ENCODE measurements at regions of chr11 and their contacts with region 1.

Region 1: DNA sequence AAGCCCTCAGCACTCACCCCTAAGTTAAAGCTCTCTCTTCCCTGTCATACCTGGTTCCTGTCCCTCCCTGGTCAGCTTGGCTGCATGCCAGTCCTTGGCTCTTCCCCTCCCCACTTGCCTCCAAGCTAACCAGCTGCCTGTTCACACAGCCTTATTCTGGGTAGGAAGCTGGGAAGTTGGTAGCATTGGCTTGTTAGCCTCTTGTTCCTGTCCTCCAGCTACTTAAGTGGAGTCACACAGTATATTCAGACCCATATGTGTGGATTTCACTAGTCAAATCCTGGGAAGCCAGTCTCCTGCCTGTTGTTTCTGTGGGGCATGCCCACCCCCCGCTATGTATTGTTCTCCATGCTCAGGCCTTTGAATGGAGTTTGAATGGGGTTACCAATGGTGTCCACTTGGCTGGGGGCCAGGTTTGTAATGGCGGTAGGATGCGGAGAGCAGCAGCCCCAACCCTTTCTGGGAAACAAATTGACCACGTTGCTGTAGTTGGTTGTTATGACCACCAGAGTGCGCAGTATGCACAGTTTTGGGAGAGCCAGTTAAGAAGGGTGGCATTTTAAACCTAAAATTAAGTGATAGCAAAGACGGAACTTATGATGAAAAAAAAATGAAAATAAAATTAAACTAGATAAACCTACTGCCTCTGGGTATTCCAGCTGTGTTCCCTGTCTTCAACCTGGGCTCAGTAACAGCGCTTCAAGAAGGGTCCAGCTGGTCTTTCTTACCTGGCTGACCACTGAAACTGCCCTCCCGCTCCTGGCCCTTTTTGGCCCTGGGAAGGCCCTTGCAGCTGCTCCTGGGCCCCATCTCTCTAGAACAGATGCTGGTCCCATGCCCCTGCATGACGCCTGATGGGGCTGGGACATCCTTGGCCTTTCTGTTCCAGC is 10.7 kb upstream of the RPS3 start:
- DNase-seq: peak; percentile 58 to 85 (median 67)
- H3K4me3 ChIP-seq: no peak overlapping the region
- H3K27ac ChIP-seq: no peak overlapping the region
- H3K4me1 ChIP-seq: peaks cover 0 to 3% of the 10 kb centered on the region in 2 donors
- H3K27me3 ChIP-seq: peaks cover 6% of the 10 kb centered on the region
- CTCF ChIP-seq: peak; percentile 73 to 84 (median 82)
- POLR2A ChIP-seq: no peak

Region 2: DNA sequence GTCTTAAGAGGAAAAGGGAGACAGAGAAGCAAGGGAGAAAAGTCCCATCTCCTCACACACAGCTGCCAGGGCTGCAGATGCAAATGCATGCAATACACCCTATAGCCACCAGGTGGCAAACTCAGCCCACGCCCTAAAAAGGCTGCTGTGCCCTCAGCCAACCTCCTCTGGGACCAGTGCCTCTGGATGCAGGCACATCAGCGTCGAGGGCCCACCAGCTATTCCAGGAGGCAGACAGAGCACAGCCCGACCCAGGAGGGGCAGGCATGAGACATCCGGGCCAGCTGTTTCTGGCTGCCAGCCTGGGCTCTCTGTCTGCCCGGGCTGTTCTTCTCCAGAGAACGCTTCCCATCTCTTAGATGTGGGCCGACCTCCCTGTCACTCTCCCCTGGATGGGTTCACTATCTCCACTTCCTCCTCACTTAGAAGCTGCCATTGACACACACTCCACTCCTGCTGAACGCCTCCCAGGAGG is 108.4 kb before region 1 on chr11:
- intact Hi-C with region 1: loop called (anchors 1 to 2 kb)
- DNase-seq: peak; percentile 71 to 92 (median 78)
- H3K4me3 ChIP-seq: no peak overlapping the region
- H3K27ac ChIP-seq: peak overlapping the region in 1 of 5 donors; percentile 7
- H3K4me1 ChIP-seq: no peaks in the 10 kb centered on the region
- H3K27me3 ChIP-seq: no peaks in the 10 kb centered on the region
- CTCF ChIP-seq: peak; percentile 96 to 98 (median 97)
- POLR2A ChIP-seq: no peak

Region 3: DNA sequence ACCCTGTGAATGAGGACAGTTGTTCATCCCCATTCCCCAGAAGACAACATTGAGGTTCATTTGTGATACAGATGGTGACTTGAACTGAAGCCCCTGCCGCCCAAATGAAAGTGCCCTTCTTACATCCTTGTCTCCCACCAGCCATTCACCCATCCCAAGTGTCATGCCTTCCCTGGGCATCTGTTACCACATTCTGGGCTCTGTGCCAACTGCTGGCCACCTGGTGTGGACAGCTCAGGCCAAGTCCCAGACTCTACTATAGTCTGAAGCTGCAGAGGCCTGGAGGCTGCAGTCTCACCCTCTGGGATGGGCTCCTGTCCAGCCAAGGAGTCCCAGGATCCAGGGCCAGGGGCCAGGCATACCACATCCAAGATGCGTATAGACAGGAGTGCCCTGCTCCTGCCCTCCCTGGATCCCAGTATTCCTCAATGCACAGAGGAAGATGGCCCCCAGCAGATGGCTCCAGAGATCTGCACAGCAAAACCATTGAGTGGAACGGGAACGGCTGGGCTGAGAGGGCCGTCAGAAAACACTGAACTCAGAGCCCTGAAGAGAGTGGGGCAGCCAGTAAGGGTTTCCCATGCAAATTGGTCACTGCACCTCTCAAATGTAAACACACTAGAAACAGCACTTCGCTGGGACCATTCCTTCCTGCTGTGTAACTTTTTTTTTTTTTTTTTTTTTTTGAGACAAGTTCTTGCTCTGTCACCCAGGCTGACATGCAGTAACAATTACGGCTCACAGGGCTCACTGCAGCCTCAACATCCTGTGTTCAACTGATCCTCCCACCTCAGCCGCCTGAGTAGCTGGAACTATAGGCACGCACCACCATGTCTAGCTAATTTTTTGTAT is 60.0 kb before region 1 on chr11:
- intact Hi-C with region 1: loop called (anchors 2 to 10 kb)
- DNase-seq: peak; percentile 39 to 81 (median 58)
- H3K4me3 ChIP-seq: no peak overlapping the region
- H3K27ac ChIP-seq: peak overlapping the region in 1 of 5 donors; percentile 40
- H3K4me1 ChIP-seq: peaks cover 0 to 16% of the 10 kb centered on the region in 2 donors
- H3K27me3 ChIP-seq: no peaks in the 10 kb centered on the region
- CTCF ChIP-seq: peak in 5 of 6 experiments; percentile 42 to 64 (median 51)
- POLR2A ChIP-seq: no peak

Region 4: DNA sequence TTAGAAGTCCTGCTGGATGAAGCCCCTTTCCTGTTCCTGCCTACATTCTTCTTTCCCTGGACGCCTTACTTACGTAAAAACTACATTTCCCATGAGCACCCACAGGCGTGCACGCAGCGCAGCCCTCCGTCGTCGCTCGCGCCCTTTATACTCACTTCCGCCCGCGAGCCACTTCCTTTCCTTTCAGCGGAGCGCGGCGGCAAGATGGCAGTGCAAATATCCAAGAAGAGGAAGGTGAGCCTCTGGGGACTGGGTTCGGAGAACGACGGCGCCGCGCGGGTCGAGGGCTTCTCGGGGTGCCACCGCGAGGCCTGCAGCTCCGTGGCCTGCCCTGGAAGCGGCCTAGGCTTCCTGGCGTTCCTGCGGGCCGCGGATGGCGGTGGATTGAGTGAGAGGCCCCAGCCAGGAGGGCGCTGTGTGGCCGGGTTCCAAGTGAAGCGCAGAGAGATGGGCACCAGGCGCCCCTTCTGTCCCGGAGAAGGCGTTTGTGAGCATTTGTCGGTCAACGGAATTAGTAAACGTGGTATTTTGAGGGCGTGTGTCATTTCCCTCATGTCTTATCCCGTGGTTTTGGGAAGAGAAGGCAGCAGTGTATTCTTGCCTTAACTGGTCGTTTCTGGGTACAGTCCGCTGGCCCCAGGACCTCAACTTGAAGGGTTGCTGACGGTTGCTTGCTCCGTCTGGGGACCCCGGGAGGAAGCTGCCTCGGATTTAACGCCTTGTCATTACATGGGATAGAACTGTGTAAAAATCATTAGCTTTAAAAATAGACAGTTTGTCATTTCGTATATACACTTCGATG is 10.9 kb after region 1 on chr11 and contains the start of gene RPS3:
- intact Hi-C with region 1: no loop called
- DNase-seq: peak; percentile 89 to 97 (median 94)
- H3K4me3 ChIP-seq: peak within 1 kb of the TSS; percentile 71 to 98 (median 86)
- H3K27ac ChIP-seq: peak within 1 kb of the TSS; percentile 70 to 98 (median 93)
- H3K4me1 ChIP-seq: peaks cover 0 to 29% of the 10 kb centered on the region in 2 donors
- H3K27me3 ChIP-seq: no peaks in the 10 kb centered on the region
- CTCF ChIP-seq: peak in 3 of 6 experiments; percentile 13 to 19 (median 19)
- POLR2A ChIP-seq: peak; percentile 49 to 84
- total RNA-seq, gene RPS3: 776 to 2,024 (median 1,323) TPM

Region 5: GRCh38 chr11:75474878-75475766 is 86.5 kb after region 1 on chr11:
- intact Hi-C with region 1: no loop called
- DNase-seq: peak in 6 of 7 donors; percentile 46 to 77 (median 50)
- H3K4me3 ChIP-seq: no peak overlapping the region
- H3K27ac ChIP-seq: peak overlapping the region in 4 of 5 donors; percentile 29 to 81 (median 56)
- H3K4me1 ChIP-seq: peaks cover 0 to 28% of the 10 kb centered on the region in 2 donors
- H3K27me3 ChIP-seq: no peaks in the 10 kb centered on the region
- CTCF ChIP-seq: no peak
- POLR2A ChIP-seq: no peak

Region 6: DNA sequence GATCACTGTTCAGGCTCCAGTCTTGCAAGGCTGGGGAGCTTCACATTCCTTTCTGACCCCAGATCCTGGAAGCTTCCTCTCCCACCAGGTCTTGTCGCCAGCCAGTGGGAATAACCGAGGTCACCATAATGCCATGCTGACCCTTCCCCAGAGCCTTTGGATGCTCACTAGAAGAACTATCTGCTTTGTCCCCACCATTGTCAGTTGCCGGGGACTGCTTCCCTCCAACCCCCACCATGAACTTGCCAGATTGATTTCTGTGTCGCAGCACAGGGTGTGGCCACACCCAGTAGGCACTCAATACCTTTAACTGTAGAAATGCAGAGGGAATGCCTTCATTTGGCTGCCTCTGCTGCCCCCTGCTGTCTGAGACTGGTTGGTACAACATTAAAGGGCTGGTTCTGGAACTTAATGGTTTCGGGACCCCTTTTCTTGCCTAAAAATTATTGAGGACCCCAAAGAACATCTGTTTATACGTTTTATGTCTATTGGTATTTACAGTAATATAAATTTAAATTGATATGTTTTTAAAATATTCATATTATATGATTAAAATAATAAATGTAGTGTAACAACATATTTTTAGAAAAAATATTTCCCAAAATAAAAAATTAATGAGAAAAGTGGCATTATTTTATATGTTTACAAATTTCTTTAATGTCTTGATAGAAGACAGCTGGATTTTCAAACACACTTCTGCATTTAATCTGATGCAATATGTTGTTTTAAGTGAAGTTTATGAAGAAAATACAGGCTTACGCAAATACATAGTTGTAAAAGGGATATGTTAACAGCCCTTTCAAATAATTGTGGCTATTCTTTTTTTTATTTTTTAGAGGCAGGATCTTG is 143.8 kb after region 1 on chr11:
- intact Hi-C with region 1: loop called in 1 of 2 experiments (anchors 2 kb)
- DNase-seq: peak in 6 of 7 donors; percentile 54 to 91 (median 71)
- H3K4me3 ChIP-seq: no peak overlapping the region
- H3K27ac ChIP-seq: no peak overlapping the region
- H3K4me1 ChIP-seq: no peaks in the 10 kb centered on the region
- H3K27me3 ChIP-seq: no peaks in the 10 kb centered on the region
- CTCF ChIP-seq: peak; percentile 80 to 97 (median 92)
- POLR2A ChIP-seq: peak in 1 of 2 donors; percentile 12